Posterior vena cava (tissue), 2 donors: ENCODE measurements at regions of chr21 and their contacts with region 1.

Region 1: GRCh38 chr21:41640748-41641509 is 125.9 kb downstream of the RIPK4 start:
- DNase-seq: peak; percentile 73

Region 2: DNA sequence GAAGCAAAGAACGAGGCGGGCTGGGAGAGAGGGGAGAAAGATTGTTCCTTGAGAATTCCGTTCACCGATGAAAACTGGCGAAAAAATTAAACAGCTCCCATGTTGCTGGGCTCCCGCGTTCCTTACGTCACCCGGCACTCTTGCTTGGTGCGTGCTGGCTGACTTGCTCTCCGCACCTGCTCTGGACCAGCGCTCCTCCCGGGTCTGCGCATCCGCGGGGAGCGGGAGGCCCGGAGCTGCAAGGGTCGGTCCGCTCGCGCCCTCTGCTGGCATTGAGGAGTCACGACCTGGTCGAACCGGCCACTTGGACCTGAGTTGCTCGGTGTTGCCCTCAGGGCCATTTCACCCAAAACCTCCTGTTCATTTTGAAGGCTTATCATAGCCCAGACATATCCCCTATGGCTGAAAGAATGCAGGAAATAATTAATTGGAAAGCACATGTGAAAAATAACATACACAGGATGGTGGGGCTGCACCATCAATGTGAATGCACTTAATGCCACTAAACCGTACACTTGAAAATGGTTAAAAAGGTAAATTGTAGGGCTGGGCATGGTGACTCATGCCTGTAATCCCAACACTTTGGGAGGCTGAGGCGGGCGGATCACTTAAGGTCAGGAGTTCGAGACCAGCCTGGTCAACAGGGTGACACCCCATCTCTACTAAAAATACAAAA is 571.8 kb before region 1 on chr21:
- intact Hi-C with region 1: no loop called
- DNase-seq: peak; percentile 92

Region 3: GRCh38 chr21:41658416-41658712 is 17.4 kb after region 1 on chr21:
- intact Hi-C with region 1: loop called in 1 of 2 experiments (anchors 1 kb)
- DNase-seq: peak; percentile 30

Region 4: GRCh38 chr21:41684381-41685245 is 43.7 kb after region 1 on chr21:
- intact Hi-C with region 1: loop called in 1 of 2 experiments (anchors 1 kb)
- DNase-seq: no peak